MCF 10A (cell line): ENCODE measurements at regions of chr1 and their contacts with region 1.

Region 1: DNA sequence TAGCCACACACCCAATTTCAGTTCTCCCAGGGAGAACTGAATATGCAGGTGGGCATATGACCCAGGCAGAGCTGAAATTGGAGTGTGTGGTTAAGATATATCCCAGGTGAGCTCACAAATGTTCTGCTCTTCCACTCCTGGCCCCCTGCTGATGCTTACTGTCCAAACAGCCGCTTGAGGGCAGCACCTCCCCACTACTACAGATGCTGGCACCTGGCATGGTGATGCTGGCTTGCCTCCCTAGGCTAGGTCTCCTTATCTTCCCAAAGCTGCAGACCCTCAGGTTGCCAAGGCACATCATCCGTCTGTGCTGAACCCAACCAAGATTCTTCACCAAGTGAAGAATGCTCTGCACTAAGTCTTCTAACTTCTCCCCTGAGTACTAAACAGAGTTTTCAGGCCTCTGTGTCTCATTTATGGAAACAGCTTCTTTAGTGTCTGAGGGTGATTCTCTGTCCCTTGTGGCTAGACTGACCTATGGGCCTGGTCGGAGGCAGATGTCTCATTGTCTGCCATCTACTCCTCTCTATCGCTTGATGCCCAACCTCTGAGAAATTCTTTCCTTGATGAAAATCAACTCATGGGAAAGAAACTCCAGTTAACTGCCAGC is 27.2 kb downstream of the XCL1 start:
- DNase-seq: peak; percentile 88
- H3K4me3 Mint-ChIP-seq: no peak overlapping the region
- H3K27ac Mint-ChIP-seq: no peak overlapping the region
- H3K4me1 Mint-ChIP-seq: peaks cover 7% of the 10 kb centered on the region
- H3K27me3 Mint-ChIP-seq: no peaks in the 10 kb centered on the region
- CTCF ChIP-seq: peak; percentile 99

Region 2: DNA sequence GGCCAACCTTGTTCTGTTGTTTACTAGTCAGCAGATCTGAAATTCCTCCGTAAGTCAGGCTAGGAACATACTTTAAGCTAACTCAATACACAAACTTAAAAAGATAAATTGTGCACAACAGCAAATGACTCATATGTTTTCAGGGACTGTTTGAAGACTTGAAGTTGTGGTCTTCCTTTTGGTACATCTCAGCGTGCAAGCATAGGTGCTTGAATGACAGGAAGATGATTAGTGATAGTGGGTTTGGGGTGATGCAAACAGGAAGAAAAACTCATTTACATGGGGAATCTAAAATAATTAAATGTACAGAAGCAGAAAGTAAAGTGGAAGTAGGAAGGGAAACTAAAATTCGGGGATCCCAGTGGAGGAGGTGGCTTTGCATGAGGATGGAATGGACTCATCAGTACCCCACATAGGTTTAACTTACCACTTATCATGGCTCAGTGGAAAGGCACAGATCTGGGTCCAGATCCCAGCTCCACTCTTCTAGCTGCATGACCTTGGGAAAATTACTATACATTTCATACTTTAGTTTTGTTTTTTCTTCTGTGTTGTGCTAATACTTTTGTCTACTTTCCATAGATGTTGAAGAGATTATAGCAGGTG is 182.1 kb before region 1 on chr1:
- CTCF ChIA-PET with region 1: no interaction called
- POLR2A ChIA-PET with region 1: no interaction called
- intact Hi-C with region 1: no loop called
- DNase-seq: no peak
- H3K4me3 Mint-ChIP-seq: no peak overlapping the region
- H3K27ac Mint-ChIP-seq: no peak overlapping the region
- H3K4me1 Mint-ChIP-seq: no peaks in the 10 kb centered on the region
- H3K27me3 Mint-ChIP-seq: peaks cover 9% of the 10 kb centered on the region
- CTCF ChIP-seq: no peak

Region 3: DNA sequence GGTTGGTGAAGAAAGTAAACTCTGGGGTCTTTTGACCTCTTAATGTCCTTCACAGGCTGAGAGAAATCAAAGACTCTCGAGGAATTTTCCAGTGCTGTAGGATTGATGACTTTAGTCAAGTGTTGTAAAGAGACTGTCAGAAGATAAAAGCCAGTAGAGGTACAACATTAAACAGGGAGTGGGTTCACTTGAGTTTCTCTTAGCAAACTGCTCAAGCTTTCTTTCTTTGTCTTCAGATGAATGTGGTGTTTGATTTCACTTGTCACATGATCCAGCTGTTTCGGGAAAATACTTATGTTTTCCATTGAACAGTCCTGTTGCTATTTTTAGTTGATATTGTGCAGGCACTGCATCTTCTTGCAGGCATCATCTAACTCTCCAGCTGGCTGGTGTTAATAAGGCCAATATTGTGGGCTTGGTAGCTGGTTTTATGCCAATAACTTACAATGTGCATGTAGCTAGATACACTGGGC is 105.4 kb before region 1 on chr1:
- CTCF ChIA-PET with region 1: no interaction called
- POLR2A ChIA-PET with region 1: no interaction called
- intact Hi-C with region 1: no loop called
- DNase-seq: no peak
- H3K4me3 Mint-ChIP-seq: no peak overlapping the region
- H3K27ac Mint-ChIP-seq: no peak overlapping the region
- H3K4me1 Mint-ChIP-seq: peaks cover 13% of the 10 kb centered on the region
- H3K27me3 Mint-ChIP-seq: no peaks in the 10 kb centered on the region
- CTCF ChIP-seq: no peak

Region 4: DNA sequence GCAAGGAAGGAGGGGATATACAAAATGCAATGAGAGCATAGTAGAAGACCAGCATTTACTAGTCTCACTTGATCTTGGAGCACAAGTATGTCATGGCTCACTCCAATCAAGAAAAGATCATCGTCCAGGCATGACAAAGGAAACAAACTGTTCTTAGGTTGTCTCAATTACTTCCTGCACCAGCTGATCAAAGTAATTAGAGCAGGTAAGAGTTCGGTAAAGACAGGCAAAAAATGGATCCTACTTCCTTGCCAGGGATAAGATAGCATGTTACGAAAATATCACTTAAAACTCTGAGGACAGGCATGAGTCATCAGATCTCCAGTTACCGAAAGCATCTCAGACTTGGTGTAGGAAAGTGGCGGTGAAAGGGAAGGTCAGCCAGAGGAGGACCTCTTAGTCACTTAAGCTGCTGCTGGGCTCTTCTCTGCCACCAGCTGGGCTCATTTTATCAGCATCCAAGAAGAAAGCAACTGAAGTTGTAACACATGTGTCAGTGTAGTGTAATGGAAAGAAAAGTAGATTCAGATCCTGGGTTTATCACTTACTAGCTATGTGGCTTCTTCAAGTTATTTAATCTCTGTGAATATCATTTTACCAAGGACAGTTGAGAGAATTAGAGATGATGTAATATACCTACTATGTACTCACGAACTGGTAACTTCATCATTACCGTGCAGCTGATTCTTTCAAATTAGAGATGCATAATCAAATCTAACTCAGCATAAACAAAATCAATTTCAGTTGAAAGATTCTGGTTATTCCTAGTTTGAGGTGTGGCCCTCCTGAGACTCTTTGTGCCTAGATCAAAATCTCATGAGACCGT is 19.6 kb after region 1 on chr1:
- CTCF ChIA-PET with region 1: interaction called, 61 read pairs
- POLR2A ChIA-PET with region 1: interaction called, 3 read pairs
- intact Hi-C with region 1: no loop called
- DNase-seq: peak; percentile 91
- H3K4me3 Mint-ChIP-seq: no peak overlapping the region
- H3K27ac Mint-ChIP-seq: no peak overlapping the region
- H3K4me1 Mint-ChIP-seq: peaks cover 7% of the 10 kb centered on the region
- H3K27me3 Mint-ChIP-seq: no peaks in the 10 kb centered on the region
- CTCF ChIP-seq: no peak

Region 5: GRCh38 chr1:168789501-168789900 is 185.9 kb after region 1 on chr1:
- CTCF ChIA-PET with region 1: interaction called, 8 read pairs
- POLR2A ChIA-PET with region 1: interaction called, 4 read pairs
- intact Hi-C with region 1: loop called (anchors 1 kb)
- DNase-seq: no peak
- H3K4me3 Mint-ChIP-seq: no peak overlapping the region
- H3K27ac Mint-ChIP-seq: no peak overlapping the region
- H3K4me1 Mint-ChIP-seq: no peaks in the 10 kb centered on the region
- H3K27me3 Mint-ChIP-seq: no peaks in the 10 kb centered on the region
- CTCF ChIP-seq: no peak

Region 6: DNA sequence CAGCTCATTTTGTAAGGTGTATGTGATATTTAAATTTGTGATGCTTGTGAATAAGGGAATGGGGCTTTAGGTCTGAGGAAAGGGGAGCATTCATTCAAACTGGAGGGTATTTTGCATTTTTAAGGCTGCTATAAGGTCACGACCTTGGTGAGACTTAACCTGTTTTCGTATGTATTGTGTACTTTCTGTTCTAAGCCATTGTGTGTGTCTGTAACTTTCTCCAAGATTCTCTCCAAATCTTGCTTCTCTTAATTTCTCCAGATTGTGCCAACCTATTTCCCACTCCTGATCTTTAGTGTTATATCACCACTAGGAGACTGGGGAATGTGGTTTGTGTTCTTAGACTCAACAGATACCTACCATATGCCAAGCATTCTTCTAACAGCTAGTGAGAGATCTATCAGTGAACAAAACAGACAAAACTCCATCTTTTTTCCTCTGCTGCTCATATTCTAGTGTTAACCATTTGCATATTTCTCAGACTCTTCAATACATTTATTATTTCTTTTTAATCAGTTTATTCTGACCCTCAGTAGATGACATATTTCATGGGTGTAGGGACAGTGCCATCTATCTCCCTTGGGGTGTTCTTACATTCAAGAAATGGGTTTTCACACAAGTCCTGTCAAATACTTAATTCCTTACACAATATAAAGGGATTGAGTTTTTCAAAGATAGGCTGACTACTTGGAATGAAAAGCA is 530.3 kb after region 1 on chr1:
- CTCF ChIA-PET with region 1: interaction called, 33 read pairs
- POLR2A ChIA-PET with region 1: no interaction called
- intact Hi-C with region 1: loop called (anchors 1 kb)
- DNase-seq: peak; percentile 32
- H3K4me3 Mint-ChIP-seq: no peak overlapping the region
- H3K27ac Mint-ChIP-seq: no peak overlapping the region
- H3K4me1 Mint-ChIP-seq: peaks cover 24% of the 10 kb centered on the region
- H3K27me3 Mint-ChIP-seq: no peaks in the 10 kb centered on the region
- CTCF ChIP-seq: peak; percentile 35

Region 7: DNA sequence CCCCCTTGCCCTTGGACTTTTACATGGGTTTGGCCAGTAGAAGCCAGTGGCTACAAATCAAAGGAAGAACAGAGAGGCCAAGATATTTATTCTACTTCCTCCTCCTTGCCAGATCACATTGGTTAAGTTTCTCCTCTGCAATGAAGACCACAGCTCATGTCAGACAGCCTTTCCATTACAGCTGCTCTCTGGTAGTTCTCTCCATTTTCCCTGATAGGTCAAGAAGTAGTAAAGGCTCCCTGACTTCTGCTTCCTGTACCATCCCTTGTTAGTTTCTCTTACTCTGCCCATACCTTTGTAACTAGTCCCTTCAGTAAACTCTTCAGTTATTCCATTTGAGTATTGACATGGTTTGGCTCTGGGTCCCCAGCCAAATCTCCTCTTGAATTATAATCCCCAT is 736.2 kb after region 1 on chr1:
- CTCF ChIA-PET with region 1: interaction called, 341 read pairs
- POLR2A ChIA-PET with region 1: no interaction called
- intact Hi-C with region 1: no loop called
- DNase-seq: no peak
- H3K4me3 Mint-ChIP-seq: no peak overlapping the region
- H3K27ac Mint-ChIP-seq: no peak overlapping the region
- H3K4me1 Mint-ChIP-seq: no peaks in the 10 kb centered on the region
- H3K27me3 Mint-ChIP-seq: no peaks in the 10 kb centered on the region
- CTCF ChIP-seq: no peak

Region 8: DNA sequence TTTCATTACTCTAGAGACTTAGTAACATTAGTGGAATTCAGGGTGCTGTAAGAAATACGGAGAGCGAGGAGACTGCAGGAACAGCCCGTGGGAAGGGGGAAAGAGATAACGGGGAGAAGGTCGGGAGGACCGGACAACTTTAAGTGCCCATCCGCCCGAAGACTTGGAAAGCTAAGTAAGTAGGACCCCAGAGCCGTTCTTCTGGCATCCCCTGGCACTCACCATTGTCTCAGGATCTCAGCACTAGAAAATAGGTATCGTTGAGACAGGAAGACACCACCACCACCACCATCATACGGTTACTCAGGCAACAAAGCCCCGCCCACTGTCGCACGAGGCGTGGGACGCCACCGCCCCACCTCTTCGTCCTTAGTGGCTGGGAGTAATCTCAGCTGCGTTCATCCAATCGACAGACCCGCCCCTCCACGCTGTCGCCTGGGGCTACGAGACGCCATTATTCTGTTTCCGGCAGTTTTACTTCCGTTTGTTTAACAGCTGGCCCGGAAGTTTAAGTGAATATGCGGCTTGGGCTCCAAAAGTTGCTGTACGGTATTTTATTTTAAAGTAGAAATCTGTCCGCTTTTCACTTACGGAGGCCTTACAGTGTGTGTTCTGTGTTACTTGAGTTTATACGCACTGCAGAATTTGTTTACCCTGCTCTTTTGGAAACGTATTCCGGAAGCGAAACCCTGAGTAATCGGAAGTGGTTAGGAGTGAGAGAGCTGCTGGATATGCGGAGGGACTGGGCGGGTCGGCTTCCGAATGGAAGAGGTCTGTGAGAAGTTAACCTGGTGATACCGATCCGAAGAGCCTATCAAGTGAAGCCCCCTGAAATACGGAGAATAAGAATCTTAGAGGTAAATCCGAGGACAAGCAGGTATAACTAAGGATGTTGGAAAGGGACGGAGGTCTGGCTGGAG is 764.1 kb after region 1 on chr1 and contains the starts of genes BLZF1 and NME7:
- CTCF ChIA-PET with region 1: interaction called, 32 read pairs
- POLR2A ChIA-PET with region 1: interaction called, 7 read pairs
- intact Hi-C with region 1: no loop called
- DNase-seq: peak; percentile 99
- H3K4me3 Mint-ChIP-seq: no peak within 1 kb of the TSS
- H3K27ac Mint-ChIP-seq: no peak within 1 kb of the TSS
- H3K4me1 Mint-ChIP-seq: peaks cover 24% of the 10 kb centered on the region
- H3K27me3 Mint-ChIP-seq: no peaks in the 10 kb centered on the region
- CTCF ChIP-seq: no peak
- total RNA-seq, gene BLZF1: 57.8 and 66.1 TPM in 2 replicates
- total RNA-seq, gene NME7: 36.5 and 46.8 TPM in 2 replicates